Spleen (tissue), 13 donors: ENCODE measurements at regions of chr3 and their contacts with region 1.

Region 1: GRCh38 chr3:17258823-17259436 is 374.2 kb downstream of the PLCL2 start:
- DNase-seq: no peak
- H3K4me3 ChIP-seq: no peak overlapping the region
- H3K27ac ChIP-seq: no peak overlapping the region
- H3K4me1 ChIP-seq: peaks cover 0 to 7% (median 2%) of the 10 kb centered on the region in 6 donors
- H3K27me3 ChIP-seq: no peaks in the 10 kb centered on the region
- CTCF ChIP-seq: peak in 10 of 11 experiments; percentile 25 to 74 (median 64)
- POLR2A ChIP-seq: no peak

Region 2: DNA sequence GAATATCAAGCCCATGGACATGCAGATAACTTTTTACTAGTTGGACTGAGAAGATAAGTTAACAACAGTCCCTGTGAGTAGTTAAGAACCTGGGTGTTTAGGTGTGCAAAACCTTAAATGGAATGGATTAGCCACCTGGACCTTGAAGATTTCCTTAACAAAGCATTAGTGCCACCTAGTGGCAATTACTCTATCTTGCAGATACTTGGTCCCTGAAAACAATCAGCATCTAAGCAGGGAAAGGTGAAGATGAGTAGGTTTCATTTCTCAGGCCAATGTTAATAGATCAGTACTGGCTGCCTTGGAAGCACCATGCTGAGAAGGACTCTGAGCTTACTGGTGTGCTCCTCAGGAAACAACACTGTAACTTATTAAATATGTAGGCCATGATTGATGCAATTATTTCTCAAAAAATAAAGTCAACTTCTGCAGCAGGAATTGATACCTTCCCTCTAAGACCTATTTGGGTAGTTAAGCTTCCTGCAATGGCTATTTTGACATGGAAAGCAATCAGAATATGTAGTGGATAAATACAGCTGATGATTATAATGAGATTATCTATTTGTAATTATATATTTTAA is 154.1 kb after region 1 on chr3:
- intact Hi-C with region 1: loop called (anchors 5 kb)
- DNase-seq: no peak
- H3K4me3 ChIP-seq: no peak overlapping the region
- H3K27ac ChIP-seq: no peak overlapping the region
- H3K4me1 ChIP-seq: no peaks in the 10 kb centered on the region
- H3K27me3 ChIP-seq: no peaks in the 10 kb centered on the region
- CTCF ChIP-seq: peak; percentile 43 to 84 (median 80)
- POLR2A ChIP-seq: no peak